PC-9 (cell line): ENCODE measurements at regions of chr6 and their contacts with region 1.

Region 1: GRCh38 chr6:2665146-2666070 is 85.3 kb downstream of the MYLK4 start:
- DNase-seq: no peak
- H3K4me3 ChIP-seq: no peak overlapping the region
- H3K27ac ChIP-seq: no peak overlapping the region
- H3K4me1 ChIP-seq: no peaks in the 10 kb centered on the region
- H3K27me3 ChIP-seq: no peaks in the 10 kb centered on the region
- CTCF ChIP-seq: no peak

Region 2: DNA sequence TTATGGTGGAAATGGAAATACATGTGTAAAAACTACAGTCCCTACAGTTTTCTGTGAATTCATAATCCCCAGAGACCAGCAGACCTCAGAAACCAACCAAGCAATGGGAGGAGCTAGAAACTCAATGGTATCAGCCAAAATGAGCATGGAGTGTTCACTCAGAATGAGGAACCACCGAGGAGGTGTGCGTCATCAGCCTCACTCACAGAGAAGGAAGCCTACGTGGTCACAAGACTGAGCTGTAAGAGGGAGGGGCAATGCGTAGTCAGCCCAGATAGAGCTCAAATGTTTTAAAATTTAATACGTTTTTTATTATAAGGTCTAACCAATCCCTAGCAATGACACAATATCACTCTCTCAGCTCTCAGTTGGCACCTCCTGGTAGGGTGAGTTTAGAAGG is 67.9 kb after region 1 on chr6:
- CTCF ChIA-PET with region 1: no interaction called
- POLR2A ChIA-PET with region 1: interaction called, 10 read pairs
- intact Hi-C with region 1: no loop called
- DNase-seq: no peak
- H3K4me3 ChIP-seq: no peak overlapping the region
- H3K27ac ChIP-seq: no peak overlapping the region
- H3K4me1 ChIP-seq: no peaks in the 10 kb centered on the region
- H3K27me3 ChIP-seq: no peaks in the 10 kb centered on the region
- CTCF ChIP-seq: no peak

Region 3: GRCh38 chr6:3125815-3126214 is 460.4 kb after region 1 on chr6:
- CTCF ChIA-PET with region 1: no interaction called
- POLR2A ChIA-PET with region 1: no interaction called
- intact Hi-C with region 1: no loop called
- DNase-seq: no peak
- H3K4me3 ChIP-seq: no peak overlapping the region
- H3K27ac ChIP-seq: no peak overlapping the region
- H3K4me1 ChIP-seq: peaks cover under 1% of the 10 kb centered on the region
- H3K27me3 ChIP-seq: no peaks in the 10 kb centered on the region
- CTCF ChIP-seq: no peak